Endothelial cell of umbilical vein (primary cell): ENCODE measurements at regions of chr10 and their contacts with region 1.

Region 1: GRCh38 chr10:17062955-17063484 is 66.6 kb downstream of the CUBN start:
- DNase-seq: peak; percentile 90
- H3K4me3 ChIP-seq: peak overlapping the region in 1 of 3 experiments; percentile 20
- H3K27ac ChIP-seq: peak overlapping the region; percentile 100
- H3K4me1 ChIP-seq: peaks cover 76% of the 10 kb centered on the region
- H3K27me3 ChIP-seq: no peaks in the 10 kb centered on the region
- CTCF ChIP-seq: no peak
- POLR2A ChIP-seq: peak; percentile 44

Region 2: GRCh38 chr10:16891375-16892313 is 171.4 kb before region 1 on chr10:
- CTCF ChIA-PET with region 1: no interaction called
- POLR2A ChIA-PET with region 1: no interaction called
- dilution Hi-C with region 1: no loop called
- intact Hi-C with region 1: loop called (anchors 1 kb)
- DNase-seq: peak; percentile 70
- H3K4me3 ChIP-seq: no peak overlapping the region
- H3K27ac ChIP-seq: peak overlapping the region; percentile 5
- H3K4me1 ChIP-seq: peaks cover 8% of the 10 kb centered on the region
- H3K27me3 ChIP-seq: no peaks in the 10 kb centered on the region
- CTCF ChIP-seq: peak; percentile 45 to 58
- POLR2A ChIP-seq: peak; percentile 94

Region 3: GRCh38 chr10:16965740-16966447 is 97.1 kb before region 1 on chr10:
- CTCF ChIA-PET with region 1: interaction called, 5 read pairs
- POLR2A ChIA-PET with region 1: interaction called, 7 read pairs
- dilution Hi-C with region 1: no loop called
- intact Hi-C with region 1: loop called (anchors 1 kb)
- DNase-seq: peak; percentile 91
- H3K4me3 ChIP-seq: no peak overlapping the region
- H3K27ac ChIP-seq: peak overlapping the region; percentile 98
- H3K4me1 ChIP-seq: peaks cover 40% of the 10 kb centered on the region
- H3K27me3 ChIP-seq: no peaks in the 10 kb centered on the region
- CTCF ChIP-seq: no peak
- POLR2A ChIP-seq: peak; percentile 44

Region 4: DNA sequence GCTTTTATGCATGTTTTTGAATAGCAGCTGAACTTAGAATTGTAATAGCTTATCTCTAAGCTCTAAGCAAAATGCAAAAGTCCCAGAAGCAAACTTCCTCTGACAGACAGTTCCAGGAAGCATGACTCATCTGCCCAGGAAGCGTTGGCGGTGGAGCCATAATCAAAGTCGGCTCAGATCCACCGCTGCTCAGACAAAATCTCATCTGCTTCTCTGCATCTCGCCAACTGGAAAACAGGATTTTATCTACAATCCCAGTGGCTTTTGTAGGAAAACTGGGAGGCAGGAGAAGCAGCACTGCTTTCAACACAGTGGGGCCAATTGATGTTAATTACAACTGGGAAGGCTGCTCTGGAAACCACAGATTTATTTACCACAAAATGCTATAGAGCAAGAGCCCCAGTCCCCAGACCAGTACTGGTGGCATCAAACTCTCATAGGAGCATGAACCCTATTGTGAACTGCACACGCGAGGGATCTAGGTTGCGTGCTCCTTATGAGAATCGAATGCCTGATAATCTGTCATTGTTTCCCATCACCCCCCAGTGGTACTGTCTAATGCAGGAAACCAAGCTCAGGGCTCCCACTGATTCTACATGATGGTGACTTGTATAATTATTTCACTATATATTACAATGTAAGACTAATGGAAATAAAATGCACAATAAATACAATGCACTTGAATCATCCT is 33.3 kb before region 1 on chr10:
- CTCF ChIA-PET with region 1: interaction called, 4 read pairs
- POLR2A ChIA-PET with region 1: no interaction called
- dilution Hi-C with region 1: no loop called
- intact Hi-C with region 1: loop called (anchors 1 kb)
- DNase-seq: peak; percentile 96
- H3K4me3 ChIP-seq: peak overlapping the region in 1 of 3 experiments; percentile 34
- H3K27ac ChIP-seq: peak overlapping the region; percentile 99
- H3K4me1 ChIP-seq: peaks cover 59% of the 10 kb centered on the region
- H3K27me3 ChIP-seq: no peaks in the 10 kb centered on the region
- CTCF ChIP-seq: no peak
- POLR2A ChIP-seq: peak; percentile 71

Region 5: GRCh38 chr10:17122726-17123661 is 60.0 kb after region 1 on chr10:
- CTCF ChIA-PET with region 1: no interaction called
- POLR2A ChIA-PET with region 1: no interaction called
- dilution Hi-C with region 1: no loop called
- intact Hi-C with region 1: no loop called
- DNase-seq: no peak
- H3K4me3 ChIP-seq: no peak overlapping the region
- H3K27ac ChIP-seq: no peak overlapping the region
- H3K4me1 ChIP-seq: no peaks in the 10 kb centered on the region
- H3K27me3 ChIP-seq: no peaks in the 10 kb centered on the region
- CTCF ChIP-seq: no peak
- POLR2A ChIP-seq: no peak

Region 6: DNA sequence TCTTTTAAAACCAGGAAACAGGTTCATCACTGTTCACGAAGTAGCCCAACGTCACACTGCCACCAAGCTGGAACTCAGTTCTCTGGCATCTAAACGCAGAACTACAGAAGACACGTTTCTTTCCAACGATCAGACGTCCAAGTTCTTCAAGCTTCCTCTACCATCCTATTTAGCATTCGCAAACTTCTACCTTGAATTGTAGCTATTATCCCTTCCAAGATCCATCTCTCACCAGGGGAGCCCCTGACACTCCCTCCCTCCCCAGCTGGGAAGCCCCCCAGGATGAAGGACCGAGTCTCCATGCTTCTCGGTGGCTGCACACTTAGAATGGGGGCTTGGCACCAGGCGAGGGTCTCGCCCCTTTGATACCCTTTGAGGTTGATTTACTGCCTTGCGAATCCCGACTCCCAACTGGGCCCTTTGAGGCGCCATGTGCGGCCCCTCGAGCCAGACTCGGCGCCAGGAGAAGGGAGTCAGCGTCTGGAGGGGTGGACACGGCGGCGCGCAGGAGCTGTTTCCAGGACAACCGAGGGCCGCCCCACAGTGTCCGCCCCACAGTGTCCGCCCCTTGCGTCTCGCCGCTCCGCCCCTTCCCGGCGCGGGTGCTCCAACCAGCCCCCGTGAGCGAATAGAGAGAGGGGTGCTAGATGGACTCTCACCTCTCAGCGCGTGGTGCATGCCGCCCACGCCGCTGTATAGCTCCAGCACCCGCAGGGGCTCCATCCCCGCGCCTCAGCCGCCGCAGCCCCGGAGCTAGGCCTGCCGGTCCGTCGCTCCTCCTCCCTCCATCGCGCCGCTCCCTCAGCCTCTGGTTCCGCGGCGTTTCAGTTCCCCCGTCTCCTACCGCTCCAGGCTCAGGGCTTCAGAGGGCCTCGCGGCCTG is 138.1 kb after region 1 on chr10 and contains the start of gene TRDMT1:
- CTCF ChIA-PET with region 1: interaction called, 3 read pairs
- POLR2A ChIA-PET with region 1: interaction called, 6 read pairs
- dilution Hi-C with region 1: no loop called
- intact Hi-C with region 1: loop called (anchors 1 kb)
- DNase-seq: peak; percentile 91
- H3K4me3 ChIP-seq: peak within 1 kb of the TSS; percentile 69 to 95 (median 91)
- H3K27ac ChIP-seq: peak within 1 kb of the TSS; percentile 100
- H3K4me1 ChIP-seq: peaks cover 28% of the 10 kb centered on the region
- H3K27me3 ChIP-seq: no peaks in the 10 kb centered on the region
- CTCF ChIP-seq: no peak
- POLR2A ChIP-seq: peak; percentile 86
- total RNA-seq, gene TRDMT1: 12.3 and 15.2 TPM in 2 replicates